Tibial artery (tissue), 4 donors: ENCODE measurements at regions of chr4 and their contacts with region 1.

Region 1: GRCh38 chr4:114659386-114660008 is 60.9 kb downstream of the UGT8 start:
- DNase-seq: peak in 1 of 2 donors; percentile 23
- H3K4me3 ChIP-seq: no peak overlapping the region
- H3K27ac ChIP-seq: no peak overlapping the region
- H3K4me1 ChIP-seq: no peaks in the 10 kb centered on the region
- H3K27me3 ChIP-seq: no peaks in the 10 kb centered on the region
- CTCF ChIP-seq: peak; percentile 41 to 53

Region 2: DNA sequence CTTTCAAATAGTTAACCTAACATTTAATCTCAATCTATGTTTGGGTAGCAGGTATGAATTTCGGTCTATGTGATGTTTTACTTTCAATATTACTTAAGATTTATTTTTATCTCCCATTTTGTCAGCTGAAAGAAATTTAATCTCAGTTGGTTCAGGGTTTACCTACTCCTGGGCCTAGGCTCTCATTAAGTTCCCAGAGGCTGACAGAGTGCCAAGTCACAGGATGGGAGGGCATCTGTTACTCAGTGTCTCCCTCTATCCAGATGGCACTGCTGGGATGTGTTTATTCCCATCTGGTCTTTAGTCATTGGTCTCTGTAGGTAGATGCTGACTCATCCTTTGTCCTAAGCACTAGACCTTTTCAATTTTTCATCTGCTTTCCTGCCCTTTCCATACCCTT is 550.6 kb before region 1 on chr4:
- intact Hi-C with region 1: no loop called
- DNase-seq: no peak
- H3K4me3 ChIP-seq: no peak overlapping the region
- H3K27ac ChIP-seq: no peak overlapping the region
- H3K4me1 ChIP-seq: no peaks in the 10 kb centered on the region
- H3K27me3 ChIP-seq: no peaks in the 10 kb centered on the region
- CTCF ChIP-seq: no peak

Region 3: GRCh38 chr4:114386637-114387233 is 272.8 kb before region 1 on chr4:
- intact Hi-C with region 1: loop called (anchors 10 kb)
- DNase-seq: no peak
- H3K4me3 ChIP-seq: no peak overlapping the region
- H3K27ac ChIP-seq: no peak overlapping the region
- H3K4me1 ChIP-seq: no peaks in the 10 kb centered on the region
- H3K27me3 ChIP-seq: peaks cover 0 to 3% of the 10 kb centered on the region in 2 donors
- CTCF ChIP-seq: peak; percentile 47 to 55

Region 4: DNA sequence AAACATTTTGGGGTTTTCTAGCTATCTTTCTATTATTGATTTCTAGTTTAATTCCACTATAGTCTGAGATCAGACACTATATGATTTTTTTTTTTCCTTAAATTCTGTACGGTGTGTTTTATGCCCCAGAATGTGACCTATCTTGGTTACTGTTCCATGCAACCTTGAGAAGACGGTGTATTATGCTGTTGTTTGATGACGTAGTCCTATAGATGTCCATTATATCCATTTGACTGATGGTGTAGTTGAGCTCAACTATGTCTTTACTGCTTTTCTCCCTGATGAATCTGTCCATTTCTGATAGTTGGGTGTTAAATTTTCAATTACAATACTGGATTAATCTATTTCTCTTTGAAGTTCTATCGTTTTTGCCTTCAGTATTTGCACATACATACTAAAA is 241.4 kb after region 1 on chr4:
- intact Hi-C with region 1: no loop called
- DNase-seq: no peak
- H3K4me3 ChIP-seq: no peak overlapping the region
- H3K27ac ChIP-seq: no peak overlapping the region
- H3K4me1 ChIP-seq: no peaks in the 10 kb centered on the region
- H3K27me3 ChIP-seq: no peaks in the 10 kb centered on the region
- CTCF ChIP-seq: no peak